ENCODE measurements at regions of chrX and their contacts with region 1.

Region 1: DNA sequence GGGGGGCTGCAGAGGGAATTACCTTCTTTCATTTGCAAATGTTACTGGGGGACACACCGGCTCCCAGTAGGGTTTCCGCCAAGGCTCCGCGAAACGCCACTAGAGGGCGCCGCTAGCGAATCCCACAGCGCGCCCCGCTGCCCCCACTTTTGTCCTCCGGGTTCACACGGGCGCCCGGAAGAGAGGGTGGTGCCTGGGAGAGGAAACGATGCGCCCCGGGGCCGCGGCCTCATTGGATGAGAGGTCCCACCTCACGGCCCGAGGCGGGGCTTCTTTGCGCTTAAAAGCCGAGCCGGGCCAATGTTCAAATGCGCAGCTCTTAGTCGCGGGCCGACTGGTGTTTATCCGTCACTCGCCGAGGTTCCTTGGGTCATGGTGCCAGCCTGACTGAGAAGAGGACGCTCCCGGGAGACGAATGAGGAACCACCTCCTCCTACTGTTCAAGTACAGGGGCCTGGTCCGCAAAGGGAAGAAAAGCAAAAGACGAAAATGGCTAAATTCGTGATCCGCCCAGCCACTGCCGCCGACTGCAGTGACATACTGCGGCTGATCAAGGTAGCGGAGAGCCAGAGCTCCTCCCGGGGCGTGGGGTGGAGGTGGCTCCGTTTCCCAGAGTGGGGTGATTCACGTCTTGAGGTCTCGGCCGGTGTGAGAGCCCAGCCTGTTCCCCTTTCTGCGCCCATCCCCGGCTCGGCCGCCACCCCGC is at the start of gene SAT1:
- DNase-seq: peak; percentile 84 to 97
- H3K4me3 ChIP-seq: peak within 1 kb of the TSS; percentile 53 to 73
- H3K27ac ChIP-seq: peak within 1 kb of the TSS; percentile 89 to 94
- H3K4me1 ChIP-seq: no peaks in the 10 kb centered on the region
- H3K27me3 ChIP-seq: no peaks in the 10 kb centered on the region
- CTCF ChIP-seq: peak; percentile 60 to 74 (median 71)
- total RNA-seq, gene SAT1: 349 TPM

Region 2: GRCh38 chrX:23742697-23743622 is 40.1 kb before region 1 on chrX and contains the start of gene ACOT9:
- intact Hi-C with region 1: loop called (anchors 1 kb)
- DNase-seq: peak; percentile 87 to 97
- H3K4me3 ChIP-seq: peak within 1 kb of the TSS; percentile 71 to 79
- H3K27ac ChIP-seq: peak within 1 kb of the TSS; percentile 93 to 98
- H3K4me1 ChIP-seq: no peaks in the 10 kb centered on the region
- H3K27me3 ChIP-seq: no peaks in the 10 kb centered on the region
- CTCF ChIP-seq: no peak
- total RNA-seq, gene ACOT9: 6.6 TPM

Region 3: DNA sequence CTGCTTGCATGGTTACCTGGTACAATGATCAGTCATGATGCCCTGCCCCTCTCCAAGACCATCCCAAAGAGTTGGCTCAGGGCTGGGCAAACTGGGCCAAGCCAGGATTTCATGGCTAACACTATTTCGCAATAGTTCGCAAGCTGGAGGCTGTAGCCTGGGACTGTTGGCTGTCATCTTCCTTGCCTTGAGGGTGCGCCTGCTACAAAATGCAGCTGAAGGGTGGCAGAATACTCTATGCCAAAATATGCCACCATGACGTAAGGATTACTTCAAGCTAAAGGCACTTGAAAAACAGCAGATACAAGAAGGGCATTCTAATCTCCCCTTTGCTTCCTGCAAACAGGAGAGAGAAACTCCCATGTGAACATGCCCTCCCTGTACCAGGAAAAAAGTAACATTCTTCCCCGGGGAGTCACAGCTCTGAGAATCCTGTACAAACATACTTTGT is 20.9 kb after region 1 on chrX:
- intact Hi-C with region 1: loop called (anchors 1 kb)
- DNase-seq: peak in 1 of 2 donors; percentile 75
- H3K4me3 ChIP-seq: no peak overlapping the region
- H3K27ac ChIP-seq: peak overlapping the region; percentile 24 to 58
- H3K4me1 ChIP-seq: no peaks in the 10 kb centered on the region
- H3K27me3 ChIP-seq: no peaks in the 10 kb centered on the region
- CTCF ChIP-seq: no peak

Region 4: DNA sequence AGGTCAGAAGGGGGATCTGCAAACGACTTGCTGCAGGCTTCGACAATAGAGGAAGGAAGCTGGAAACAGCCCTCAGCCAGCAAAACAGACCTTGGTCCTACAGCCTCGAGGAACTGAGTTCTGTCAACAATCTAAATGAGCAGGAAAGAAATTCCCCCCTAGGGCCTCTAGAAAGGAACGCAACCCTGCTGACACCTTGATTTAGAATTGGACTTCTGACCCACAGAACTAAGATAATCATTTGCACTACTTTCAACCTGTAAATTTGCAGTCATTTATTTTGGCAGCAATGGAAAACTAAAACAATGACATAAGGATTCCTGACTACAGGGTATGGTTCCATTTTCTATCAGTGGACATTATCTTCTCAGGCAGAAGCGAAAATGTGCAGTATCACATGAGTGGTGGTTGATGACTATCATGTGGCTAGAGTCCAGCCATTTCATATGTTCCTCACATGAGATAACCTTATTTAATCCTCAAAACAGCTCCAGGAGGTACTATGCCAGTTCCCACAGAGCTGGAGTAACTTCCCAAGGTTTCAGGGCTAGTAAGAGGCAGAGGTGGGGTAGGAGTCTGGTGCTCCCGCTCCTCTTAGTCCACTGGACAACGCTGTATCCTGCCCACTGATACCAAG is 61.6 kb after region 1 on chrX:
- intact Hi-C with region 1: no loop called
- DNase-seq: no peak
- H3K4me3 ChIP-seq: no peak overlapping the region
- H3K27ac ChIP-seq: no peak overlapping the region
- H3K4me1 ChIP-seq: no peaks in the 10 kb centered on the region
- H3K27me3 ChIP-seq: no peaks in the 10 kb centered on the region
- CTCF ChIP-seq: no peak

Region 5: DNA sequence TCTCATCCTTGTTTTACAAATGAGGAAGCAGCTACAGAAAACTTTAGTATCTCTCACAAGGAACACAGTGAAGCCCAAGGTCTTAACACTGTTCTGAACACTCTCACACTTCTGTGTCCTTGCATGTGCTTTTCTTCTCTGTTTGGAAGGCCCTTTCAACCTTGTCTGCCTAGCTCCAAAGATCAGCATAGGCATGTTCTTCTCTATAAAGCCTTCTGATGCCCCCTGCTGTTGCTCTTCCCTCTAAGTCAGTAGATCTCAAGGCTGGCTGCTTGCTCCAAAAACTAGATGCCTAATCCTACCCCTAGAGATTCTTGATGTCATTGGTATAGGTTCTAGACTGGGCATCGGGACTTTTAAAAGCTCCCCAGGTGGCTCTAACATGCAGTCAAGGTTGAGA is 118.8 kb after region 1 on chrX:
- intact Hi-C with region 1: loop called (anchors 1 kb)
- DNase-seq: peak in 1 of 2 donors; percentile 72
- H3K4me3 ChIP-seq: peak overlapping the region; percentile 29 to 42
- H3K27ac ChIP-seq: peak overlapping the region; percentile 6 to 65
- H3K4me1 ChIP-seq: peaks cover 0 to 13% of the 10 kb centered on the region in 2 donors
- H3K27me3 ChIP-seq: no peaks in the 10 kb centered on the region
- CTCF ChIP-seq: peak; percentile 45 to 57 (median 55)

Region 6: GRCh38 chrX:24024819-24025740 is 242.1 kb after region 1 on chrX:
- intact Hi-C with region 1: loop called (anchors 5 kb)
- DNase-seq: peak; percentile 43 to 90
- H3K4me3 ChIP-seq: peak overlapping the region; percentile 75 to 94
- H3K27ac ChIP-seq: peak overlapping the region; percentile 93 to 96
- H3K4me1 ChIP-seq: no peaks in the 10 kb centered on the region
- H3K27me3 ChIP-seq: no peaks in the 10 kb centered on the region
- CTCF ChIP-seq: no peak

Region 7: GRCh38 chrX:24054182-24055042 is 271.4 kb after region 1 on chrX and contains the start of gene EIF2S3:
- intact Hi-C with region 1: loop called (anchors 5 kb)
- DNase-seq: peak; percentile 70 to 95
- H3K4me3 ChIP-seq: no peak within 1 kb of the TSS
- H3K27ac ChIP-seq: peak within 1 kb of the TSS; percentile 87 to 93
- H3K4me1 ChIP-seq: peaks cover 0 to 13% of the 10 kb centered on the region in 2 donors
- H3K27me3 ChIP-seq: no peaks in the 10 kb centered on the region
- CTCF ChIP-seq: peak; percentile 28 to 77 (median 62)
- total RNA-seq, gene EIF2S3: 60.7 TPM

Measured in ascending aorta (tissue), 2 donors.